ENCODE measurements at regions of chr20 and their contacts with region 1.

Region 1: DNA sequence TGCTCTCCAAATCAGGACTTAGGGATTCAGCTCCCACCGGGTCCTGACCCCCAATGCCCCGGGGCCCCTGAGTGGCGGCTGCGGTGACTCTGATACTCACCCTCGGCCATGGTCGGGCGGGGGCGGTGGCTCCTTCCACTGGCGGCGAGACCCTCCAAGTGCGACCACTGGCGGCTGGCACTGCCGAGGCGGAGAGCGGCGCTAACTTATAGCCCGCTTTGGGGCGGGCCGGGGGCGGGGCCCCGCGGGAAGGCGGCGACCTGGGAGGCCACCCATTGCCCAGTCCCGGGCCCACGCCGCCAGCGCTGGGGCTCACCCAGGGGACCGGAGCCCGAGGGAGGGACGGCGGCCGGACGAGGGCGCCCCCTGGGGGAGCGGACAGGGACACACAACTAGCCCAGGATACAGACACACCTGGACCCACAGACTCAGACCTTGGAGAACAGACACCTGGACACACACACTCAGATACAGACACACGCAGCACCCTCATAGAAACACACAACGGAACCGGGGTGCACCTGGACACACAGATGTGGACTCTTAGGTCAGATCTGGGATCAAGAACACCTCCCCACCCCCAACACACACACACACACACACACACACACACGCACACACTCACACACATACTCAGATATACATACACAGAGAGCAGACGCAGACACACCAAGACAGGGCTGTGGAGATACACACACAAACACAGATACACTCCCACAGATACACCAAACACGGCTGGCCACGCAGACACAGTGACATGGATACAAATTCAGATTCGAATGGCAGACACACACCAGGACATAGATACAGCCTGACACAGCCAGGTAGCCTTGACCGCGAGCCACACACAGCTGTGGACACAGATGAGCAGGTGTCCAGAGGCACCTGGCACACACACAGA is at the start of gene TGM2:
- DNase-seq: peak; percentile 92
- H3K4me3 ChIP-seq: peak within 1 kb of the TSS; percentile 58 to 77
- H3K27ac ChIP-seq: peak within 1 kb of the TSS in 1 of 2 experiments; percentile 58; a peak in 3 of 4 replicates
- H3K4me1 ChIP-seq: peaks cover 35 to 36% of the 10 kb centered on the region in 2 experiments; a peak in 3 of 4 replicates
- H3K27me3 ChIP-seq: no peaks in the 10 kb centered on the region
- CTCF ChIP-seq: peak; percentile 87
- EP300 ChIP-seq: no peak
- RAD21 ChIP-seq: peak; percentile 81
- polyA plus RNA-seq, gene TGM2: 548 and 676 TPM in 2 replicates

Region 2: GRCh38 chr20:38065764-38066375 is 99.5 kb before region 1 on chr20:
- CTCF ChIA-PET with region 1: interaction called, 12 read pairs
- POLR2A ChIA-PET with region 1: no interaction called
- DNase-seq: no peak
- H3K4me3 ChIP-seq: no peak overlapping the region
- H3K27ac ChIP-seq: peak overlapping the region in 1 of 2 experiments; percentile 29; a peak in 2 of 4 replicates
- H3K4me1 ChIP-seq: peaks cover 0 to 20% of the 10 kb centered on the region in 2 experiments; a peak in 2 of 4 replicates
- H3K27me3 ChIP-seq: no peaks in the 10 kb centered on the region
- CTCF ChIP-seq: no peak
- EP300 ChIP-seq: no peak
- RAD21 ChIP-seq: no peak

Region 3: GRCh38 chr20:38113401-38114325 is 51.7 kb before region 1 on chr20:
- CTCF ChIA-PET with region 1: interaction called, 15 read pairs
- POLR2A ChIA-PET with region 1: no interaction called
- DNase-seq: no peak
- H3K4me3 ChIP-seq: no peak overlapping the region
- H3K27ac ChIP-seq: peak overlapping the region; percentile 58 to 65
- H3K4me1 ChIP-seq: peaks cover 38 to 42% of the 10 kb centered on the region in 2 experiments
- H3K27me3 ChIP-seq: no peaks in the 10 kb centered on the region
- CTCF ChIP-seq: peak; percentile 57
- EP300 ChIP-seq: no peak
- RAD21 ChIP-seq: peak; percentile 66

Region 4: DNA sequence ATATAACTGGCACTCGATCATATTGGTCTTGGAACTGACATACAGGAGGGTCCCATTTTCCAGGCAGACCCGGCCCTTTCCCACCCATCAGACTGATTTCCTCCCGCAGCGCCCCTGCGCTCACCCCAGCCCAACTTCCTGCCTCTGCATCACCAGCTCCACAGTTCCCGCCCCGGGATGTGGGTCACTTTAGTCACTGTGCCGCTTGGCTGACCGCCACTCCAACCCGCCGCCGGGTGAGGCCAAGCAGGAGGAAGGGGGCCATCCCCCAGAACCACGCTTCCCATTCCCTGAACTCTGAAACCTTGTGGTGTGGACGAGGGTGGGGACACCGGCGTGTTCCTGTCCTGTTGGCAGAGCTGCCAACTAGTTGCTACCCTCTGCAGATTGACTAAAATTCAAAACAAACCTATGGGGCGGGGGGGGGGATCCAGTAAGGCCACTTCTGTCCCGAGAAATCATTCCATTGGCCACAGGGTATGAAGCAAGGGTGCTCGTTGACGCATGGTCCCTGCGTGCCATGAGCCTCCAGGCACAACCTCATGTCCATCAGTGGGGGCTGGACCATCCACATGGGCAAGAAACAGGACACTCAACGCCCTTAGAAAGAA is 12.6 kb before region 1 on chr20:
- CTCF ChIA-PET with region 1: interaction called, 10 read pairs
- POLR2A ChIA-PET with region 1: no interaction called
- DNase-seq: peak; percentile 91
- H3K4me3 ChIP-seq: no peak overlapping the region
- H3K27ac ChIP-seq: peak overlapping the region; percentile 86 to 98
- H3K4me1 ChIP-seq: peaks cover 30 to 33% of the 10 kb centered on the region in 2 experiments
- H3K27me3 ChIP-seq: no peaks in the 10 kb centered on the region
- CTCF ChIP-seq: no peak
- EP300 ChIP-seq: peak; percentile 40 to 47; a peak in 2 of 4 replicates
- RAD21 ChIP-seq: no peak